Endothelial cell of umbilical vein (primary cell): ENCODE measurements at regions of chr1 and their contacts with region 1.

Region 1: GRCh38 chr1:67832737-67833601 is at the start of gene GNG12:
- DNase-seq: peak; percentile 83
- H3K4me3 ChIP-seq: peak within 1 kb of the TSS; percentile 55 to 86 (median 55)
- H3K27ac ChIP-seq: peak within 1 kb of the TSS; percentile 90
- H3K4me1 ChIP-seq: peaks cover 29% of the 10 kb centered on the region
- H3K27me3 ChIP-seq: no peaks in the 10 kb centered on the region
- CTCF ChIP-seq: no peak
- POLR2A ChIP-seq: peak; percentile 85
- total RNA-seq, gene GNG12: 145 and 152 TPM in 2 replicates

Region 2: DNA sequence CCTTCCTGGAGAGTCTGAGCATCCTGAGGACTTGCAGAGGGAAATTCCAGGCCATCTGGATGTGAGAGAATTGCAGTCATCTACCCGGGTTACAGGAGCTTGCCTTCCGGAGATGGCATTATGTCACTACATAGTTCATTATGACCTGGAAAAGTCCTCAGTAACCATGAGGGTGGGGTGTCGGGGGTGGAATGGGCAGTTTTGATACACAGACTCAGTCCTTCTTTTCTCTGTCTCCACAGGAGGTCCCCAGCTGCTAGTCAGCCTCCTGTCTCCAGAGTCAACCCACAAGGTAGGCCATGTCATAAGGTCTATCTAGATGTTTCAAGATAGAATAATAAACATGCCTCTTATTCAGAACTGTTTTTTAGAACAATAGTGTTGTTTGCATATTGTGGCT is 1567.2 kb before region 1 on chr1:
- CTCF ChIA-PET with region 1: no interaction called
- POLR2A ChIA-PET with region 1: no interaction called
- dilution Hi-C with region 1: no loop called
- intact Hi-C with region 1: loop called (anchors 5 kb)
- DNase-seq: peak; percentile 83
- H3K4me3 ChIP-seq: no peak overlapping the region
- H3K27ac ChIP-seq: peak overlapping the region; percentile 89
- H3K4me1 ChIP-seq: peaks cover 66% of the 10 kb centered on the region
- H3K27me3 ChIP-seq: no peaks in the 10 kb centered on the region
- CTCF ChIP-seq: no peak
- POLR2A ChIP-seq: no peak

Region 3: DNA sequence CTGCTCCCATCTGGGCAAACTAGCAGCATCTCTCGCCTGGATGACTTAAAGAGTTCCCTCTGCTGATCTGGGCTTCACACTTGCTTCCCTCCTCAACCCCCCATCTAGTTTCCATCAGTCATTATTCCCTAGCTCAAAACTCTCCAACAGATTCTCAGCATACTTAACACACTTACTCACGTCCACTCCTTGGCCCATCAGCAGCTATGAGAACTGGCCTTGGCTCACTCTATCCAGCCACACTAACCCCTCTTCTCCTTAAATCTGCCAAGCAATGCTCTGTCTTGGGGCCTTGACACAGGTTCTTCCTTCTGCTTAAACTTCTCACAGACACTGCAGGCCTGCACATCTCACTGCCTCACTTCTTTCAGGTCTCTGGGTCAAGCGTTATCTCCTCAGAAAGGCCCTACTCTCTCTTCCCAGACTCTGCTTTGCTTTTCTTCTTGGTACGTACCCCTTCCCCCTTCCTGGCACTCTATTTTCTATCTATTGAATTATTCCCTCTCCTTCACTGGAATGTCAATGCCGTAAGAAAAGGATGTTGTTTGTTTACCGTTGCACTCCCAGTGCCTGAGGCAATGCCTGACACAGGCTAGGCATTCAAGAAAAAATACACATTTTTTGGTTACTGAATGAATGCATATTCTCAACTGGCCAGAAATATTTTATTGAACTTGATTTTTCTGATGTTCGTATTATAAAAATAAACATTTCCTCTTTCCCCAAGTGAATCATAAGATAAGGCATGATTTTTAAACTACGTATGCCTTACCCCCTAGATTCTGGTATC is 41.1 kb before region 1 on chr1:
- CTCF ChIA-PET with region 1: interaction called, 4 read pairs
- POLR2A ChIA-PET with region 1: interaction called, 8 read pairs
- dilution Hi-C with region 1: no loop called
- intact Hi-C with region 1: loop called (anchors 1 kb)
- DNase-seq: peak; percentile 87
- H3K4me3 ChIP-seq: no peak overlapping the region
- H3K27ac ChIP-seq: peak overlapping the region; percentile 92
- H3K4me1 ChIP-seq: peaks cover 96% of the 10 kb centered on the region
- H3K27me3 ChIP-seq: no peaks in the 10 kb centered on the region
- CTCF ChIP-seq: no peak
- POLR2A ChIP-seq: no peak

Region 4: DNA sequence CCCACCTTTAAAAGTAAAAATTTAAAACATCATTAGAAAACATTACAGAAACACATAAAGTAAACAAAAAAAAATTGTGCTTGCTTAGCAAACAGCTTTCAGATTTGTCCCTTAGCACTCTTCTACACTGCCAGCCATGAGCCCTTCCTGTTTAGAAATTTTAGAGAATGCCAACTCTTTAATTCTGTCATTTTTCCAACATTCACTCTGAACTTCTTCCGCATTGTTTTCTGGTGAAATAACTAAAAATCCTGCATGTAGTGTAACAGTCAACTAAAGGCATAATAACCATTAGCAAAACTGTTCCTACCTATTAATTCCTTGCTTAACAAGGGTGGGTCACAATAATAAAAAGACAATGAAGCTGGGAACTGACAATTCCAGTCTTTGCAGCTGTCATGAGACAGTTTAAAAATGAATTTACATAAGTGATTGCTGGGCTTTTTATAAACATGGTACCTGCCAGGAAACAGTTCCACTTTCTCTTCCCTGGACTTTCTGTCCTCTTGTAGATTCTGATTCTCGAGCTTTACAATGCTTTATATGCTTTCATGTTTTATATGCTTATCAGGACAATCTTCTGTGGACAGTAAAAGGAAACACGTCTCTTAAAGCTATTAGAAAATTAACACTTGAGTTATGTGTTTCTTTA is 18.7 kb before region 1 on chr1:
- CTCF ChIA-PET with region 1: interaction called, 10 read pairs
- POLR2A ChIA-PET with region 1: interaction called, 3 read pairs
- dilution Hi-C with region 1: no loop called
- intact Hi-C with region 1: loop called (anchors 1 kb)
- DNase-seq: peak; percentile 72
- H3K4me3 ChIP-seq: no peak overlapping the region
- H3K27ac ChIP-seq: peak overlapping the region; percentile 36
- H3K4me1 ChIP-seq: peaks cover 56% of the 10 kb centered on the region
- H3K27me3 ChIP-seq: no peaks in the 10 kb centered on the region
- CTCF ChIP-seq: no peak
- POLR2A ChIP-seq: no peak

Region 5: DNA sequence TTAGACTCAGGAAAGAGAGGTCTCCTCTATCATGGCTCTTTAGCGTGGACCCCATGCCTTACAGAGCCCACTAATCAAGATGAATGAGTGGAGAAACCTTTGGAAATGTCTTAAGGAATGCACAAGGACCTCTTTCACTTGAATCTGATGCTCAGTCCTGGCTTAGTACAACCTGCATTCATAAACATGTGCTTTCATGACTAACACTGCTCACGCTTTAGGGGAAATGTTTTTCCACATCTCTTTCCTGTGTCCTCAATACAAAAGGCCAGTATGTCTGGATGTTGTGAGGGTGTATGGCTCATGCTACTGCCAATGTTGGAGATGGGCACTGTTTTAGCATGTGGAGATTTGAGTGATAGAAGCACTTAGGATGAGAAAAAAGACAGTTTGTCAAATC is 14.5 kb after region 1 on chr1:
- CTCF ChIA-PET with region 1: interaction called, 17 read pairs
- POLR2A ChIA-PET with region 1: interaction called, 4 read pairs
- dilution Hi-C with region 1: no loop called
- intact Hi-C with region 1: loop called (anchors 1 kb)
- DNase-seq: peak; percentile 97
- H3K4me3 ChIP-seq: no peak overlapping the region
- H3K27ac ChIP-seq: peak overlapping the region; percentile 98
- H3K4me1 ChIP-seq: peaks cover 40% of the 10 kb centered on the region
- H3K27me3 ChIP-seq: no peaks in the 10 kb centered on the region
- CTCF ChIP-seq: no peak
- POLR2A ChIP-seq: no peak

Region 6: GRCh38 chr1:67861856-67862516 is 29.0 kb after region 1 on chr1:
- CTCF ChIA-PET with region 1: no interaction called
- POLR2A ChIA-PET with region 1: no interaction called
- dilution Hi-C with region 1: no loop called
- intact Hi-C with region 1: no loop called
- DNase-seq: no peak
- H3K4me3 ChIP-seq: no peak overlapping the region
- H3K27ac ChIP-seq: no peak overlapping the region
- H3K4me1 ChIP-seq: peaks cover 2% of the 10 kb centered on the region
- H3K27me3 ChIP-seq: no peaks in the 10 kb centered on the region
- CTCF ChIP-seq: no peak
- POLR2A ChIP-seq: no peak

Region 7: DNA sequence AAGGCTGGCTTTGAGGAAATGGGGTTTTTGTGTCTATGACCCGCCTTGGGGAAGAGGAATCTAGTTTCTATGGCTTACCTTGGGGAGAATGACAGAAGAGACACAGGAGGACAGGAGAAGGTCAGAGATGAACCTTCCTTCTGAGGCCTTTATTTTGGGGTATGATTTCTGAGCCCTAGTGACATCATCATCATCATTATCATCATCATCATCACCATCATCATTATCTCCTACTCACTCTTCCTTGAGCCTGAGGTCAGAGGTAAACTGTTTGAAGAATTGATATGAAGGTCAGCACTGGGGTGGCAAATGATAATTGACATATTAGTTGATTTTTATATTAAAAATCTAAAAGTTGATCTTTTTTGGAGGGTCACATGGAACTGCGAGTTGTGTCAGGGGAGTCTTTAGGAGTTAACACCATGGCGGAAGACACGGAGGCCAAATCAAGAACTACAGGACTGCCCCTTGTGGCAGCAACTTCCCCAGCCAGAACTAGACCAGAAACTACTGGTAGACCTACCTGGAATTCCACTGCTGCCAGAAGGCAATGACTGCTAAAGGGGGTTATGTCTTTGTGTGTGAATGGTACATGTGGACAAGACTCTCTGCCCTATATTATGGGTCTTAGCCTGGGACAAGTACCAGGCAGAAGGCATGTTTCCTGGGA is 449.1 kb after region 1 on chr1:
- CTCF ChIA-PET with region 1: no interaction called
- POLR2A ChIA-PET with region 1: no interaction called
- dilution Hi-C with region 1: no loop called
- intact Hi-C with region 1: no loop called
- DNase-seq: no peak
- H3K4me3 ChIP-seq: no peak overlapping the region
- H3K27ac ChIP-seq: no peak overlapping the region
- H3K4me1 ChIP-seq: no peaks in the 10 kb centered on the region
- H3K27me3 ChIP-seq: no peaks in the 10 kb centered on the region
- CTCF ChIP-seq: no peak
- POLR2A ChIP-seq: no peak